Caco-2 (cell line): ENCODE measurements at regions of chr18 and their contacts with region 1.

Region 1: GRCh38 chr18:63848159-63848558 is 39.3 kb upstream of the SERPINB2 start:
- DNase-seq: peak in 1 of 2 experiments; percentile 9
- H3K4me3 ChIP-seq: no peak overlapping the region
- H3K4me3 Mint-ChIP-seq: no peak overlapping the region
- H3K27ac Mint-ChIP-seq: no peak overlapping the region
- H3K4me1 ChIP-seq: no peaks in the 10 kb centered on the region
- H3K4me1 Mint-ChIP-seq: no peaks in the 10 kb centered on the region
- H3K27me3 ChIP-seq: no peaks in the 10 kb centered on the region
- H3K27me3 Mint-ChIP-seq: no peaks in the 10 kb centered on the region
- CTCF ChIP-seq: peak in 1 of 2 experiments; percentile 41

Region 2: GRCh38 chr18:63339920-63340484 is 508.2 kb before region 1 on chr18:
- CTCF ChIA-PET with region 1: no interaction called
- POLR2A ChIA-PET with region 1: no interaction called
- intact Hi-C with region 1: loop called (anchors 5 kb)
- DNase-seq: no peak
- H3K4me3 ChIP-seq: no peak overlapping the region
- H3K4me3 Mint-ChIP-seq: no peak overlapping the region
- H3K27ac Mint-ChIP-seq: no peak overlapping the region
- H3K4me1 ChIP-seq: 0 out of 2 replicates have a peak, but pooled peaks cover 4% of the 10 kb centered on the region
- H3K4me1 Mint-ChIP-seq: no peaks in the 10 kb centered on the region
- H3K27me3 ChIP-seq: no peaks in the 10 kb centered on the region
- H3K27me3 Mint-ChIP-seq: no peaks in the 10 kb centered on the region
- CTCF ChIP-seq: peak; percentile 13 to 25

Region 3: DNA sequence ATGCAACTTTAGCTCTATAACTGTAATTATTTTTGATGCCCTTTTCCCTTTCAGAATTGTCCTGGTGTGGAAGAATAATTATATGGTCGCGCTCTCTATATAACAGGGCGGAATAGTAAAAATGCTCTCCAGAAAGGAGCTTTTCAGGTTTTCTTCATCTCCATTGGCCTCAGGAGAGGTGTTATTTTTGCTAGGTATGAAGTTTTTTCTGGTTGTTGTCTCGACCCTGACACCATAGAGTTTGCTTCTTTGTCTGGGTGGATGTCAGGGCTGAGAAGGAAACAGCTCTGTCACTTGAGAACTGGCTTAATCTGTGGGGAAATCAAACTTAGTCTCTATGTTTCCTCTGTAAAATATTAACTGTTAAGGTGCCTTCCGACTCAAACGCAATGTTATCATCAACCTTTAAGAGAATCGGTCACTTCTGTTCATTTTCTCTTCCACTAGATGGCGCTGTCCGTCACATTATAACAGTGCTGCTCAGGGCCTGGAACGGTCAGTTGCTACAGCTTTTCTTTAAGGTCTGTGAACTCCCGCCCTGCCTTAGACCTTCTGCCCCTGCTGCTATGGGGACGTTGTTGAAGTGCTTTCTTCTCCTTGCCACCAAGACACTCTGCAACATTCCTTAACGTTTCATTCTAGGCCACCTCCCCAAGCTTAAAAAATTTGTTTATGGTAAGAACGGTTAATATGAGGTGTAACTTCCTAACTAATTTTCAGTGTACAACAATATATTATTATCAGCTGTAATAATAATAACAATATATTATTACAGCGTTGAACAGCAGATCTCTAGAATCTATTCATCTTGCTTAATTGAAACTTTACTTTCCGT is 329.8 kb before region 1 on chr18:
- CTCF ChIA-PET with region 1: no interaction called
- POLR2A ChIA-PET with region 1: no interaction called
- intact Hi-C with region 1: loop called (anchors 1 kb)
- DNase-seq: peak; percentile 49 to 51
- H3K4me3 ChIP-seq: no peak overlapping the region
- H3K4me3 Mint-ChIP-seq: no peak overlapping the region
- H3K27ac Mint-ChIP-seq: no peak overlapping the region
- H3K4me1 ChIP-seq: no peaks in the 10 kb centered on the region
- H3K4me1 Mint-ChIP-seq: no peaks in the 10 kb centered on the region
- H3K27me3 ChIP-seq: no peaks in the 10 kb centered on the region
- H3K27me3 Mint-ChIP-seq: peaks cover 6% of the 10 kb centered on the region
- CTCF ChIP-seq: peak; percentile 22 to 40

Region 4: DNA sequence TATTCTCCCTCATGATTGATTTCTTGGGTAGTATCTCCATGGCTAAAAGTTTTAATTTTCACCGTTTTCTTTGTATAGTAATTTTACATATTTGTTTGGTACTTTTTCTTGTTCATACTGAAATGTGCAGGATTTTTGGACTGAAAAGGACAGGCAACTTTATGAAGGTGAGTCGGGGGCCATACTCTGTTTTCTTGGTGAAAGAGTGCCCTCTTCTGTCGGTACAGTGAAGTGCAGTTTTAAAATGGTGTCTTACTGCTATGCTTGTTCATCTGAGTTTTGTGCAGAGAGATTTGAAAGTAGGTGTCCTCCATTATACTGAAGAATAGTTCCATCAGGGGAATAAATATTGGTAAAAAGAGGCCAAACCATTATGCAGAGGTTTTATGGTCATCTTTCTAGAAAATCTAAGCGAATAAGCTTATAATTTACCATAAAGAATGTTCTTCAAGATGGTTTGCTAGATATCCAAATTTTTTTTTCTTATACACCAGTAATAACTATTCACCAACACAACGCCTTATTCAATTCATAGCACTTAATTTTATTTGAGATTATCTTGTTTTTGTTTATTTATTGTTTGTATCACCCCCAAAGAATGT is 269.7 kb before region 1 on chr18:
- CTCF ChIA-PET with region 1: no interaction called
- POLR2A ChIA-PET with region 1: no interaction called
- intact Hi-C with region 1: loop called (anchors 5 kb)
- DNase-seq: peak in 1 of 2 experiments; percentile 14
- H3K4me3 ChIP-seq: no peak overlapping the region
- H3K4me3 Mint-ChIP-seq: no peak overlapping the region
- H3K27ac Mint-ChIP-seq: no peak overlapping the region
- H3K4me1 ChIP-seq: no peaks in the 10 kb centered on the region
- H3K4me1 Mint-ChIP-seq: no peaks in the 10 kb centered on the region
- H3K27me3 ChIP-seq: no peaks in the 10 kb centered on the region
- H3K27me3 Mint-ChIP-seq: peaks cover 3% of the 10 kb centered on the region
- CTCF ChIP-seq: peak; percentile 34 to 48

Region 5: DNA sequence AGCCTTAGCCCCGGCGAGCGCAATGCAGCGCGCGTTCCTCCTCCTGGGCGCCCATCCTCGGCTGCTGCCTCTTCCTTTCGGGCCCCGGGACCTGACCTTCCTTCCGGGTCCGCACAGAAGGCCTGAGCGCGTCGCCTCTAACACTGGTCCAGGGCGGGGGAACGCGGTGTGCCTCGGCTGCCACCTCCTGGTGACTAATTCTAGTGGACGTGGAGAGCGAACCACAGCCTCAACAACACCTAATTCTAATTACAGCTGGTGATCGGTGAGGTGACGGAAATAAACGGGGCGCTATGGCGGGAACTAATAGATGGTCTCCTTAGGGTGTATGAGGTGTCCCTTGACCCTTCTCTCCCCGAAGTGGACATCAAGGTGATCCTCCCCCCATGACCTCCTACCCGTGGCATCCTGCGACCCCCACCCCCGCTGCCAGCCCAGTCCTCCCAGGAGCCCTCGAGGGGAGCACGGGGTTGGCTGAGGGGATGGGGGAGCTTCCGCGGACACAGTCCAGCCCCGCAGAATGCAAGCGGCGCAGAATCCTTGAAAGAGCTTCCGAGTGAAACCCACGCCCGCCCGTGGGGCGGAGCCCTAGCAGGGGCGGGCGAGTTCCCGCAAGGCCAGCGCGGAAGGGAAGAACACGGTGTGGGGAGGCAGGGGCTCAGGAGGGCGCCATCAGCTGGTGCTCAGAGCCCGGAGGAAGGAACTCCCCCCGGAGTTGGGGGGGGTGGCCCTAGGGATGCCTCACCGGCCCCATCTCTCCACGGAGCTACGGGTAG is 88.2 kb after region 1 on chr18:
- CTCF ChIA-PET with region 1: no interaction called
- POLR2A ChIA-PET with region 1: no interaction called
- intact Hi-C with region 1: loop called (anchors 2 kb)
- DNase-seq: peak; percentile 51 to 61
- H3K4me3 ChIP-seq: no peak overlapping the region
- H3K4me3 Mint-ChIP-seq: no peak overlapping the region
- H3K27ac Mint-ChIP-seq: no peak overlapping the region
- H3K4me1 ChIP-seq: no peaks in the 10 kb centered on the region
- H3K4me1 Mint-ChIP-seq: no peaks in the 10 kb centered on the region
- H3K27me3 ChIP-seq: no peaks in the 10 kb centered on the region
- H3K27me3 Mint-ChIP-seq: no peaks in the 10 kb centered on the region
- CTCF ChIP-seq: peak in 1 of 2 experiments; percentile 31